K562 (cell line): ENCODE measurements at regions of chr4 and their contacts with region 1.

Region 1: DNA sequence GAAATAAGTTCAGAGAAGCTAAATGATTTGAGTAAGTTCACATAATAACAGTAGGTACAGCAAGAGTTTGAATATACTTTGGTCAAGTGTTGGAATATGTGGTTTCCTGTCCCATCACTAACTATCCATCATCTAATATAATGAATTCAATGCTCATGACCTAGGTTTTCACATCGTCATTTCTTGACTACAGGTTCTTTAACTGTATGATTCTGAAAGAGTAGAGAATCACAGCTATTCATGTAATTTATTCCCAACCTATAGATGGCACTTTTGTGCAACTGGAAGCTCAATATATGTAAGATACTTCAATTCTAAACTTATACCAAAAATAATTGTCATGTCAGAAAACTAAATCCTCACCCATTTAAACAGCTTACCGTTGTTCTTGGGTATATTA is 53.1 kb downstream of the TIGD2 start:
- DNase-seq: no peak
- ATAC-seq: no peak
- H3K4me3 ChIP-seq: no peak overlapping the region
- H3K27ac ChIP-seq: no peak overlapping the region
- H3K4me1 ChIP-seq: no peaks in the 10 kb centered on the region
- H3K27me3 ChIP-seq: no peaks in the 10 kb centered on the region
- CTCF ChIP-seq: no peak
- EP300 ChIP-seq: no peak
- POLR2A ChIP-seq: no peak
- RAD21 ChIP-seq: peak in 1 of 2 experiments; percentile 30; a peak in 2 of 4 replicates

Region 2: DNA sequence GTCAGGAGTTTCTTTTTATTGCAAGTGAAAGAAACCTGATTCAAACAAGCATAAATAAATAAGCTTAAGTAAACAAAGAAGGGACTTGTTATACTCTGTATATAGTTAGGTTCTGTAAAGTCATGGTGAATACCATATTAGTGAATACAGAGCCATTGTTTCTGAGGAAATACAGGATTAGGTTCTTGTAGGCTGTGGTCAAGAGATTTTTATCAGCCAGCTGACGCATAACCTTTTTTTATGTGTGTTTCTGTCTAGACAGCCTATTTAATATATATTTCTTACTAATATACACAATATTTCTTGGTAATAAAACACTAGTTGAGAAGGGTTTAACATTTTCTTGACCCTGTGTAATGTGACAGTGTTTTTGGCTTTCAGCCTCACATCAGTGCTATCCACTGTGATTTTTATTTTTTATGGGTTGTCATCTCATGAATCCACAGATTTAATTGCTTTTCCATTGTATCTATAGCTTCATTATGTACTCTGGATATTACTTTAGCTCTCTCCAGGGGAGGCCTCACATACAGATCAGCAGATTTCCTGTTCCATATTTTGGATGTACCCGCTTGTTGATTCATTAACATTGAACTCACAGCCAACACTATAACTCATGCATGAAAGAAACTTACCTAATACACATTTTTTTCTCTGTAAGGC is 564.1 kb before region 1 on chr4:
- CTCF ChIA-PET with region 1: no interaction called
- POLR2A ChIA-PET with region 1: no interaction called
- in situ Hi-C with region 1: no loop called
- intact Hi-C with region 1: no loop called
- DNase-seq: no peak
- ATAC-seq: no peak
- H3K4me3 ChIP-seq: no peak overlapping the region
- H3K27ac ChIP-seq: no peak overlapping the region
- H3K4me1 ChIP-seq: peaks cover 0 to 15% of the 10 kb centered on the region in 2 experiments; a peak in 3 of 5 replicates
- H3K27me3 ChIP-seq: no peaks in the 10 kb centered on the region
- CTCF ChIP-seq: no peak
- EP300 ChIP-seq: no peak
- POLR2A ChIP-seq: no peak
- RAD21 ChIP-seq: no peak

Region 3: DNA sequence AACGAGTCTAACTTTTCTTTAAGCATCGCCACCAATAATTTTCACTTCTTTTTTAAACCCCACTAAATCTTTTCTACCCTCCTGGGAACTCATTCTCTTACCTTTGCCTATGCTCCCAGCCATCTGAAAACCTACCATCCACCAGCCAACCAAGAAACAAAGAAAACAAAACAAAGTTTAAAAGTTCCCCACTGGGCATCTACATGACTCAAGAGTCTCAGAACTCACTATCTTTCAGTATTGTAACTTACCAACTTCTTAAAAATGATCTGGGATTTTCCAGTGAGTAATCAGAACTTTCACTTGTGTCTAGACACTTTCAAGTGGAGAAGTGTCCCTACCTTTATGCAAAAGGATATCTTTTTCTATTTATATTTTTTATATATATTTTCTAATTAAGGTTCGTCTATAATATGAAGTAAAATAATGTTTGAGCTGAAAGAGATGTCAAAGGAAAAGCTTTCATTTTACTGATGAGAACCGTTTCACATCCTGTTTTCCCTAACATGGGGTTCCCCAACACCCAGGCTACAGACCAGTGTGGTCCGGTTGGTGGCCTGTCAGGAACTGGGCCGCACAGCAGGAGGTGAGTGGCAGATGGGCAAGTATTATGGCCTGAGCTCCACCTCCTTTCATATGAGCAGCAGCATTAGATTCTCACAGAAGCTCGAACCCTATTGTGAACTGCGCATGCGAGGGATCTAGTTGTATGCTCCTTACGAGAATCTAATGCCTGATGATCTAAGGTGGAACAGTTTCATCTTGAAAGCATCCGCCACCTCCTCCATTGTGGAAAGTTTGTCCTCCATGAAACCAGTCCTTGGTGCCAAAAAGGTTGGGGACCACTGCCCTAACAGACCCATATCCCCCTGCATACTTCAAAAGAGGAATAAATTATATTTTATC is 62.9 kb before region 1 on chr4:
- CTCF ChIA-PET with region 1: no interaction called
- POLR2A ChIA-PET with region 1: no interaction called
- in situ Hi-C with region 1: no loop called
- intact Hi-C with region 1: no loop called
- DNase-seq: no peak
- ATAC-seq: no peak
- H3K4me3 ChIP-seq: no peak overlapping the region
- H3K27ac ChIP-seq: no peak overlapping the region
- H3K4me1 ChIP-seq: no peaks in the 10 kb centered on the region
- H3K27me3 ChIP-seq: peaks cover 5 to 23% of the 10 kb centered on the region in 2 experiments; a peak in 4 of 5 replicates
- CTCF ChIP-seq: no peak
- EP300 ChIP-seq: no peak
- POLR2A ChIP-seq: no peak
- RAD21 ChIP-seq: no peak

Region 4: DNA sequence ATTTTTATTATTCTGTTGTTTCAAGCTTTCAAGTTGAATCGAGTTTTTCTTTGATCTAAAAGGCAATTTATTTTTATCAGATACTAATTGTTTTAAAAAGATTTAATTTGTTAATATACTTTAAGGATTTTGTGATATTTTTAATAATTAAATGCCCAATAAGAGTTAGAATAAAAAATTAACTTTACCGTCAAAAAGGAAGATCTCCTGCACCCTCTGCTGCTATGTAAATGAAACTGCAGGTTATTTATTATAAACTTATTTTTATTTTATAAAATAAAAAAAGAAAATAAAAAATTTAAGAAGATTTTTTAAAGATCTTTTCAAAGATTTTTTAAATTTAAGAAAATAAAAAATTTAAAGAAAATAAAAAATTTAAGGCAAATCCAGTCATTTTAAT is 1128.9 kb after region 1 on chr4:
- CTCF ChIA-PET with region 1: interaction called, 3 read pairs
- POLR2A ChIA-PET with region 1: no interaction called
- in situ Hi-C with region 1: no loop called
- intact Hi-C with region 1: loop called (anchors 10 kb)
- DNase-seq: no peak
- ATAC-seq: no peak
- H3K4me3 ChIP-seq: no peak overlapping the region
- H3K27ac ChIP-seq: no peak overlapping the region
- H3K4me1 ChIP-seq: no peaks in the 10 kb centered on the region
- H3K27me3 ChIP-seq: no peaks in the 10 kb centered on the region
- CTCF ChIP-seq: peak in 1 of 3 experiments; percentile 33; a peak in 2 of 6 replicates
- EP300 ChIP-seq: no peak
- POLR2A ChIP-seq: no peak
- RAD21 ChIP-seq: 0 out of 4 replicates have a peak, but pooled peaks of 1 of the 2 experiments have one; percentile 12